ENCODE measurements at regions of chr10 and their contacts with region 1.

Region 1: GRCh38 chr10:17375936-17376584 is 78.3 kb downstream of the ST8SIA6 start:
- DNase-seq: peak; percentile 54
- H3K4me3 Mint-ChIP-seq: no peak overlapping the region
- H3K27ac Mint-ChIP-seq: no peak overlapping the region
- H3K4me1 Mint-ChIP-seq: no peaks in the 10 kb centered on the region
- H3K27me3 Mint-ChIP-seq: no peaks in the 10 kb centered on the region

Region 2: DNA sequence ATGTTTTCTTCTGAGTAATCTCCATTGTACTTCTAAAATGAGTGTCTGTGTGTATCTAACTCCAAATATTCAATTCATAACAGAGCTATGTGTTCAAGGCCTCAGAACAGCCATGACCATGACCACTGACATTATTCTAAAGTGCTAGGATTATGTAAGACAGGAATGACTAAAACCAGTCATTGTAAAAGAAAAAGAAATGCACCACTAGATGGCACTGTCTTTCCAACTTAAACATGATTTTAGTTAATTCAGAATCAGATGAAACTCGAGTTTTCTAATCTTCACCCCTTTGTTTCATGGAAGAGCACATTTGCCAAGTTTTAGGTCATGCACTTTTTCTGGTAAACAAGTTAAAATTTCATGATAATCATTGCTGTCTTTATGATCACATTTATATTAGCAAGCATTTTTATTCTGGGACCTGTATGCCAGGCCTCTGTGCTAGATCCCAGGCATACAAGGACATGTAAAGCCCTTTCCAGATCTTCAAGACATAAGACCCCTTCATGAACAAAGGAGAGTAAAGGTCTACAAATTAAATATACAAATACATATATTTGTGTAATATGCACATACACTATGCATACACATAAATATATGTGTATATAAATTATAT is 532.7 kb before region 1 on chr10:
- CTCF ChIA-PET with region 1: no interaction called
- POLR2A ChIA-PET with region 1: no interaction called
- intact Hi-C with region 1: loop called (anchors 2 kb)
- DNase-seq: no peak
- H3K4me3 Mint-ChIP-seq: no peak overlapping the region
- H3K27ac Mint-ChIP-seq: no peak overlapping the region
- H3K4me1 Mint-ChIP-seq: peaks cover 4% of the 10 kb centered on the region
- H3K27me3 Mint-ChIP-seq: no peaks in the 10 kb centered on the region

Region 3: DNA sequence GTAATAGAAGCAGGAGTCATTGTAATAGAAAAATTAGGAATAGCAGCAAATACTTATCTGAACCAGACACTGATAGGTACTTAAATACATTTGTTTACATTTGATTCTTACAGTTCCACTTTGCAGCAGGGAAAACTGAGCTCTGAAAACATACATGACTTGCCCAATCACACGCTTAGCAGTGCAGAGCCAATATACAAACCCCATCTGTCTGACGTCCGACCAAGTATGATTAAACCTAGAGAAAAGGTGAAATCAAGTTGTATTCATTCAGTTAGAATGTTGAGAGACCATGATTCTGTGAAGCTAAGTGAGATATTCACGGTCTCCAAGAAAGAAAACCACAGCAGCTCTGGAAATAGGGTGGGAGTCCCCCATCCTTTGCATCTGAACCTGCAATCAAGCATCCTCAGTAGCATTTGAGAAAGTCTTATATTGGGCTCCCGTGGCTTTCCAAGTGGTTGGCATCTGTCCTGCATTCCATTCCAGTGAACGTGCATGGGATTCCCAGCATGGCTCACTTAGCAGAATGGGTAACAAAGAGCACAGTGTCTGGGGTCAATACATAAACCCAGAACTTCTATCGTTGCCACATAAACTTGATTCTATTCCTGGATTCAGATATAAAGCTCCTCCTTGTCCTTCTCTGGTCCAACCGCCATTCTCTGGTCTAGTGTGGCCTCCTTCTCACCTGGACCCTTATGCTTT is 410.2 kb before region 1 on chr10:
- CTCF ChIA-PET with region 1: no interaction called
- POLR2A ChIA-PET with region 1: no interaction called
- intact Hi-C with region 1: no loop called
- DNase-seq: no peak
- H3K4me3 Mint-ChIP-seq: no peak overlapping the region
- H3K27ac Mint-ChIP-seq: no peak overlapping the region
- H3K4me1 Mint-ChIP-seq: peaks cover 17% of the 10 kb centered on the region
- H3K27me3 Mint-ChIP-seq: no peaks in the 10 kb centered on the region

Region 4: GRCh38 chr10:17161775-17162174 is 214.3 kb before region 1 on chr10:
- CTCF ChIA-PET with region 1: no interaction called
- POLR2A ChIA-PET with region 1: no interaction called
- intact Hi-C with region 1: no loop called
- DNase-seq: no peak
- H3K4me3 Mint-ChIP-seq: no peak overlapping the region
- H3K27ac Mint-ChIP-seq: no peak overlapping the region
- H3K4me1 Mint-ChIP-seq: no peaks in the 10 kb centered on the region
- H3K27me3 Mint-ChIP-seq: no peaks in the 10 kb centered on the region

Region 5: DNA sequence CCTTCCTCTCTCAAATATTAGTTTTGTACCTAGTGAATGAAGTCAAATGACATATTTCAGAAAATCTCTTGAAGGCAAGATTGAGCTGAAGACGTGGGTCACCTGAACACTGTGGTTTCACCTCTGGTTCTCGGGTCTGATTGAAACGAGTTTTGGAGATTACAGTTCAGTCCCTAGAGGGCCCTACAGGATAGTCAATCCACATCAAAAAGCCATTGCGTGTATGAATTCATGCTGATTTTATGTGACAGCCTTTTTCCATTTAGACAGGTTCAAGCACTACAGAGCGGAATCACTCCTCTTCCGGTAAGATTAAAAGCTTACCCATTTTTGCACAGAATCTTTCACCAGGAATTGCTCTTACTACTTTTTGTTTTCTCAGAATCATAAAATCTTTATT is 85.8 kb before region 1 on chr10:
- CTCF ChIA-PET with region 1: interaction called, 24 read pairs
- POLR2A ChIA-PET with region 1: no interaction called
- intact Hi-C with region 1: loop called (anchors 1 kb)
- DNase-seq: peak; percentile 12
- H3K4me3 Mint-ChIP-seq: no peak overlapping the region
- H3K27ac Mint-ChIP-seq: no peak overlapping the region
- H3K4me1 Mint-ChIP-seq: peaks cover 5% of the 10 kb centered on the region
- H3K27me3 Mint-ChIP-seq: peaks cover 18% of the 10 kb centered on the region

Region 6: GRCh38 chr10:17353559-17354300 is 22.3 kb before region 1 on chr10:
- CTCF ChIA-PET with region 1: interaction called, 13 read pairs
- POLR2A ChIA-PET with region 1: no interaction called
- intact Hi-C with region 1: no loop called
- DNase-seq: no peak
- H3K4me3 Mint-ChIP-seq: no peak overlapping the region
- H3K27ac Mint-ChIP-seq: no peak overlapping the region
- H3K4me1 Mint-ChIP-seq: peaks cover 12% of the 10 kb centered on the region
- H3K27me3 Mint-ChIP-seq: peaks cover 14% of the 10 kb centered on the region

Region 7: DNA sequence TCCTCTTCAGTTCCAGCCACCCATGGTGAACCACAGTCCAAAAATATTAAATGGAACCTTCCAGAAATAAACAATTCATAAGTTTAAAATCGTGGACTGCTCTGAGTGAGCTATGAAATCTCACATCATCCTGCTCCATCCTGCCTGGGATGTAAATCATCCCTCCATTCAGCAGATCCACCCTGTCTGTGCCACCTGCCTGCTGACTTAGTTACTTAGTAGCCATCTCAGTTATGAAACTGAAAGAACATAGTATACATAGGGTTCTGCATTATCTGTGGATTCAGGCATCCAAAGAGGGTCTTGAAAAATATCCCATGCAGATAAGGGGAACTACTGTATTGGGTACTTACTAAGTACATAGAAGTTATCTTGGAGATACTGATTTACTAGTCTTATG is 10.7 kb before region 1 on chr10:
- CTCF ChIA-PET with region 1: interaction called, 23 read pairs
- POLR2A ChIA-PET with region 1: no interaction called
- intact Hi-C with region 1: no loop called
- DNase-seq: no peak
- H3K4me3 Mint-ChIP-seq: no peak overlapping the region
- H3K27ac Mint-ChIP-seq: no peak overlapping the region
- H3K4me1 Mint-ChIP-seq: no peaks in the 10 kb centered on the region
- H3K27me3 Mint-ChIP-seq: peaks cover 1% of the 10 kb centered on the region

Region 8: DNA sequence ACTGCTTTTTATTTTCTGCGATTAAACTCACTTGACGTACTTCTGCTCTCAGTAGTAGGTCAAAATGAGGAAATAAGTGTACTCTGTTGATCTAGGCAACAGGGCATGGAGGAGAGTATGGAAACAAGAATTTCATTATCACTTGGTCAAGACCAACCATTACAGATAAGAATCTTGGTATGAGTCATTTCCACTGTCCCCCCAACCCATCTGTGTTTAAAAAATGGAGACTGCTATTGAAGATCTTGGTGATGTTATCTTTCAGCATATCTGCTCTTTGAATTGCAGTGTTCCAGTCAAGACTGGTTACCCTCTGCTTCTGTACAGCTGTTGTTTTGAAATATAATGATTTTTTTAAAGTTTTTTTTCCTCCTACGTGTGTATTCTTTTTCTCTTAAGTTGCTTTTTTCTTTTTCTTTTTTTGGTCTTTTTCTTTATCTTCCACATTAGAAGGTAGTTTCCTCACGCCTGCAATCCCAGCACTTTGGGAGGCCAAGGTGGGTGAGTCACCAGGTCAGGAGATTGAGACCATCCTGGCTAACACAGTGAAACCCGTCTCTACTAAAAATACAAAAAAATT is 279.6 kb after region 1 on chr10:
- CTCF ChIA-PET with region 1: no interaction called
- POLR2A ChIA-PET with region 1: no interaction called
- intact Hi-C with region 1: no loop called
- DNase-seq: no peak
- H3K4me3 Mint-ChIP-seq: peak overlapping the region; percentile 21
- H3K27ac Mint-ChIP-seq: peak overlapping the region; percentile 53
- H3K4me1 Mint-ChIP-seq: peaks cover 72% of the 10 kb centered on the region
- H3K27me3 Mint-ChIP-seq: no peaks in the 10 kb centered on the region

Measured in activated CD4-positive, alpha-beta memory T cell treated with anti-CD3 and anti-CD28 coated beads for 36 hours (primary cell).